Posterior vena cava (tissue), 2 donors: ENCODE measurements at regions of chr1 and their contacts with region 1.

Region 1: GRCh38 chr1:110766025-110766647 is 91.4 kb upstream of the KCNA3 start:
- DNase-seq: no peak

Region 2: DNA sequence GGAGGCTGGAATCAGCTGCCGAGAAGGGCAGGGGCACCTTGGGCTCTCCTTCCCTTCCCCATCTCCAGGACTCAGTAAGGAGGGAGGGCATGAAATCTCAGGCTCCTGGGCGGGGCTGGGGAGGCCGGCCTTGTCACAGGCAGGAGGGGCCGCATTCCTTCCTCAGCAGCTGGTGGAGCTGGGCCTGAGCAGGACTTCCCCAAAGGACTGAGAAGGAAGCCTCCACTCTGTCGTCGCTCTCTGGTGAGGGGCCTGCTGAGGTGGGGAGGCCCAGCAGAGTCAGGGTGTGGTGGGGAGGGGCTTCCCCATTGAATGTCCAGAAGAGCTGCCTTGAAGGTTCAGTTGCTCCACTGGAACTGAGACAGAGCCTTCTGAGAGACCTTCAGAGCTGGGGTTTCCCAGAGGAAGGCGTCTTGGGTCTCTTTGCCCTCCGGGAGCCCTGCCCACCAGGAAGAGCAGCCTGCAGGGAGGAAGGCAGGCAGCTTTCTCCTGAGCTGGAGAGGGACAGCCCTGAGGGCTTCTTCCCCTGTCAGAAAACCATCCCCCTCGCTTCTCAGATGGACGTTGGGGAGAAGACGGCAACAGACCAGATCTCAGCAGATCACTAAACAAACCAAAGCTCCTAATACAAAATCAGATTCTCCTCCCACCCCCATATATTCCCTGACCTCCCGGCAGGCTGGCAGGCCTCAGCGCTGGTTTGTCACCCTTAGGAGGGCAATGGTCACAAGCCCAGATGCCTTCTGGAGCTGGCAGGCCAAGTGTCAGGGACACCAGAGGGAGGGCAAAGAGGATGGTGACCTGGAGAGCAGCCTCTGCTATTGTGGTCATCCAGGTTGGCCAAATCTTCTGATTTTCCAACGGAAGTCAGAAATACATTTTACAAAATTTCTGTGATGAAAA is 257.8 kb before region 1 on chr1:
- intact Hi-C with region 1: loop called in 1 of 2 experiments (anchors 10 kb)
- DNase-seq: no peak

Region 3: DNA sequence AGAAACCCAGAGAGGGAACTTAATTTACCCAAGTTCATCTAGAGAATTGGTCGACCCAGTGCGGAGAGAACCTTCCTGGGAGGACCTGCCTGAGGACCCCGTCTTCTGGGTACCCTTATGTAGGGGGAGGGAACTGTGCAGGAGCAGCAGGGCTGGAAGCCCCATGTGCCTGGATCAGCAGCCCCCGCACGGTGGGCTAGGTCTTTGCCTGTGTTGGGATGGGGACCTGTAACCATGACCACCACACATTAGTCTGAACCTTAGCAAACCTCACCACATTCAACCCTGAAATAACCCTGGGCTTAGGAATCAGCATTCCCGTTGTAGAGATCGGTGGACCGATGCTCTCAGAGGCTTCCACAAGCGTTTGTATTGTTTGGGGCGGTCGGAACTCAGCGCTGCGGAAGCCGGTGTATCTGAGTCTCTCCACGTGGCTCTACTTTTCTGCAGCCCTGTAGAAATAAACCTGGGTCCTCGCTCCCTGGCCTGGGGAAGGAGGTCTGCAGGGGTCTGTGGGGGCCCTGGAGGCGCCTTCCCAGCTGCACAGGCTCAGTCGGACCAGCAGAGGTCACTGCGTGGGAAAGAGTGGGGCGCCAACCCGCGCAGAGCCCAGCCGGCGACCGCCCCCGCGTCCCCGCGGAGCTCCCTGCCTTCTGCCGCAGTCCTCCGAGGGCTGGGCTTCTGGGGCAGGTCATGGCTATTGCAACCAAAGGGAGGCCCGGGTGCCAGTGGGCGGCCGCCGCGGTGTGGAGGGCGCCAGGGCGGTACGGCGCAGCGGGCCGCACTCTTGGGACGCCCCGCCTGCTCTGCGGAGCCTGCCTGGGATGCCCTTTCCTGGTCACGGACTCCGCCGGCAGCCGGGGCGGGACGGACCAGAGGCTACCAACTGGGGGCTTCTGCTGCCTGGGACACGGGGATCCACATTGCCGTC is 211.0 kb before region 1 on chr1:
- intact Hi-C with region 1: no loop called
- DNase-seq: no peak

Region 4: DNA sequence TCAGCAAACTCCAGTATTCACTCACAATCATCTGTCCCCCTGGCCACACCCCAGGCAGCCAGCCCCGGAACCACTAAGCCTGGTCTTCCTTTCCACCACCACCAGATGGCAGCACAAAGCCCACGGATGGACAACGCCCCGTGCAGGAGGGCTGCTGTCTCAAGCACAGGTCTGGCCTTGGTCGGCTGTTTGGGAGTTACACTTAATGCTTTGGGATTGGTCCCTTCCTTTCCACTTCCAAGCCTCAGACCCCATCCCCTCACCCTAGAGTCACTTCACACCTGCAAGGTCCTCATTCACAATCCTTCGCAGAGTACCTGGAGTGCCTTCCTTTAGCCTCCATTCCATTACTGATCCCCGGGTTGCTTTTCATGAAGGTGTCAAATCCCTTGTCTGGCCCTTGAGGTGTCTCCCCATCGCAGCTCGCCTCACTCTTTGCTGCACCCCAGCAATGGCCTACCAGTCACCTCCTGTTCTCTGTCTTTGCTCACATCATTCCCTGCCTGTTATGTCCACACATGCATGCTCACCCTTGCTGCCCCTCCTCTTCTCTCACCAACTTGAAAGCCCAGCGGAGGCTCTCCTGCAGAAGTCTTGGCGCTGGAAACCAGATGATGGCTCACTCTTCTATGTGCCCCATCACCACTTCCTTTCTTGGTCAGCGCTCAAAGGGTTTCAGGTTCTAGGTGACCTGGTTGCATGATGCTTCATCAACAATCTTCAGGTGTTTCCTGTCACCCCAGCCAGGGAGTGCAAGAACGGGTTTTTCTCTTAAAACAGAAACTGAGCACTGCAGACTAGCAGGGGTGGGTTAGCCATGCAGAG is 135.1 kb before region 1 on chr1:
- intact Hi-C with region 1: loop called (anchors 5 kb)
- DNase-seq: peak; percentile 90